CD4-positive, alpha-beta memory T cell (primary cell): ENCODE measurements at regions of chr4 and their contacts with region 1.

Region 1: DNA sequence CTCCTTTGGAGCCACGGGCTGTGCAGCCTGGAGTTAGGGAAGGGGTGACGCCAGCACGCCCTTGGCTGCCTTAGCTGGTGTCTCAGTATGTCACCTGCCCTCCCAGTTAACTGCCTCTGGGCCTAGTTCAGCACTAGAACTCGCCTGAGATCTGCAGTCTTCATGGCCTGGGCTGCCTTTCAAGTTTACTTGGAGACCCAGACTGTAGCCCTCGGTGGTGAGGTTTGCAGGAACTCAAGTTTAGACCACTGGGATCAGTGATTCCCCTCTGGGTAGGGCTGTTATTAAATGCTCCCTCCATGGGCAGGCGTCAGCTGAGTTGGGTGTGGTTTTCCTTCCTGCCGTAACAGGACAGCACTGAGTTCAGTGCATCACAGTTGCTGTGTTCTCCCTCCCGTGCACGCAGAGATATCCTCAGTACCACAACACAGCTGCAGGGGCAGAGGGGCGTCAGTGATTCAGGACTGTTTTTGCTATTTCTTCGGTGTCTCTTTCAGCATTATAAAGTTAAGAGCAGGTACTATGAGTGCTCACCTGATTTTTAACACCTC is 30.5 kb downstream of the PLAC8 start:
- DNase-seq: peak; percentile 75 to 83 (median 78)
- H3K4me3 ChIP-seq: no peak overlapping the region
- H3K4me3 Mint-ChIP-seq: peak overlapping the region in 7 of 8 donors; percentile 43 to 73 (median 73)
- H3K27ac ChIP-seq: peak overlapping the region; percentile 45
- H3K27ac Mint-ChIP-seq: peak overlapping the region; percentile 77 to 97 (median 92)
- H3K4me1 ChIP-seq: peaks cover 30% of the 10 kb centered on the region
- H3K4me1 Mint-ChIP-seq: peaks cover 27 to 39% (median 34%) of the 10 kb centered on the region in 4 donors
- H3K27me3 ChIP-seq: no peaks in the 10 kb centered on the region
- H3K27me3 Mint-ChIP-seq: no peaks in the 10 kb centered on the region

Region 2: DNA sequence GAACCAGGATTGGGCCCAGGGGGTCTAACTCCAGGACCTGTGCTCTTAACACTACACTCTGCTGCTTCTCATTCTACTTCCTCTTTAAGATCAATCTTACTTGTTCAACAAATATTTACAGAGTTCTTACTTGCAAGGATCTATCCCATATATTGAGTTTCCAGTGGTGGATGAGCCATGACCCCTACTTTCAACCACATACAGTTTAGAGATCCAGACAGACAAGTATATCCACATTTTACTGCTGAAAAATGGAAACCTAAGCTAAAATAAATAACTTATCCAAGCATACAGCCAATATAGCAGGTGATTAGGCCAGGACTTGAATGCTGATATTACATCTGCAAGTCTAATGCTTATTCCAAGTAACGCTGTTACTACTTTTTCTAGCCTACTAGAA is 540.9 kb before region 1 on chr4:
- CTCF ChIA-PET with region 1: no interaction called
- POLR2A ChIA-PET with region 1: no interaction called
- intact Hi-C with region 1: no loop called
- DNase-seq: no peak
- H3K4me3 ChIP-seq: no peak overlapping the region
- H3K4me3 Mint-ChIP-seq: no peak overlapping the region
- H3K27ac ChIP-seq: no peak overlapping the region
- H3K27ac Mint-ChIP-seq: no peak overlapping the region
- H3K4me1 ChIP-seq: no peaks in the 10 kb centered on the region
- H3K4me1 Mint-ChIP-seq: no peaks in the 10 kb centered on the region
- H3K27me3 ChIP-seq: no peaks in the 10 kb centered on the region
- H3K27me3 Mint-ChIP-seq: peaks cover 10 to 17% of the 10 kb centered on the region in 2 donors

Region 3: DNA sequence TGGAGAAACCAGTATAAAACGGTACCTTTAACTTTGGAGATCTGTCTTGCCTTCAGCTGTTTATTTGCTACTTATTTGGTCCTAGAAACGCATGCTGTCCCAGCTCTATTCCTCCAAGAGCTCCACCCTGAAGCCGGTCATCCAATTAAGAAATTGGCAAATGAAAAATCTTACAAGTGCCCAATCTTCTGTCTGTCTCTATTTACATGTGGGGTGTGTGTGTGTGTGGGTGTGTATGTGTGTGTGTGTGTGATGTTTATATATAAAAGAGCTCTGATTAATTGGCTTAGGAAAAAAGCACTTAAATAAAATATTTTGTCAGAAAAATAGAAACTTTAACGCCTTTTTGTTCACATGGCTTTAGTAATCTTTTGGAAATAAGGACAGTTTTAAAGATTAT is 13.0 kb after region 1 on chr4:
- CTCF ChIA-PET with region 1: interaction called, 9 read pairs
- POLR2A ChIA-PET with region 1: interaction called, 10 read pairs
- intact Hi-C with region 1: no loop called
- DNase-seq: no peak
- H3K4me3 ChIP-seq: no peak overlapping the region
- H3K4me3 Mint-ChIP-seq: peak overlapping the region in 3 of 8 donors; percentile 22 to 37 (median 31)
- H3K27ac ChIP-seq: no peak overlapping the region
- H3K27ac Mint-ChIP-seq: peak overlapping the region in 5 of 7 donors; percentile 14 to 78 (median 44)
- H3K4me1 ChIP-seq: peaks cover 36% of the 10 kb centered on the region
- H3K4me1 Mint-ChIP-seq: peaks cover 27 to 69% (median 43%) of the 10 kb centered on the region in 4 donors
- H3K27me3 ChIP-seq: no peaks in the 10 kb centered on the region
- H3K27me3 Mint-ChIP-seq: no peaks in the 10 kb centered on the region

Region 4: DNA sequence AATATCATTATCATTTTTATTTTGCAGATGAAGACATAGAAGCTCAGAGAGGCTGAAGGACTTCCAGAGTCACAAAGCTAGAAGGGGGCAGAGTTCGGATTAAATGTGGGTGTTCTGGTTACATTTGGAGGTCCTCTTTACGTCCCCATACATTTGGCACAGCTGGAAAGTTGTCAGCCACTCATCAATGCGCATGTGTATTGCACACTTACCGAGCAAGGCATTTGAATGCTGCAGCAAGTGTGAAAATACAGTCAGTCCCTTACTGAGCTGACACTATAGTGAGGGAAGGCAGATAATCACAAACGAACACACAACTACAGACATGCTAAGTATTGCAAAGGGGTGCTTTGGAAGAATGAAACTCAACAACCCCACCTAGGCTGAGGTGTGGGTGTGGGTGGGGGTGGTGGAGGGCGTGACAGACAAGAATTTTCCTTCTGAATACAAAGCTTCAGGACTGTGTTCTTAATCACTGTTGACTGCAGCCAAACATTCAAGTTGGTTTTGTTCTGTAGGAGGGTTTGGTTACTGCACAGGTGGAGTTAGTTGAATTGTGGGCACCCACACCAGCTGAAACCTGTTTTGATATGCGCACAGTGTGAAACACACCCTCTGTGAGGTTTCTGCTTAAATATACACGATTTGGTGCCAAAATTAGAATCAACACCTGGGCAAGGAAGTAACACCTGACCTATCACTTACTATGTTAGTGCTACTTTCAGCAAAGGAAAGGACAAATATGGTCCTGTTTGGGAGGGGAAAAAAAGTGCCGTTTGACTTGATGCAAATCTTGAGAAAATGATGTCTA is 128.2 kb after region 1 on chr4:
- CTCF ChIA-PET with region 1: interaction called, 18 read pairs
- POLR2A ChIA-PET with region 1: interaction called, 18 read pairs
- intact Hi-C with region 1: loop called (anchors 1 kb)
- DNase-seq: peak; percentile 84 to 93 (median 90)
- H3K4me3 ChIP-seq: peak overlapping the region in 1 of 2 donors; percentile 22
- H3K4me3 Mint-ChIP-seq: peak overlapping the region; percentile 50 to 88 (median 74)
- H3K27ac ChIP-seq: peak overlapping the region; percentile 45
- H3K27ac Mint-ChIP-seq: peak overlapping the region; percentile 45 to 99 (median 96)
- H3K4me1 ChIP-seq: peaks cover 80% of the 10 kb centered on the region
- H3K4me1 Mint-ChIP-seq: peaks cover 57 to 80% (median 68%) of the 10 kb centered on the region in 4 donors
- H3K27me3 ChIP-seq: no peaks in the 10 kb centered on the region
- H3K27me3 Mint-ChIP-seq: no peaks in the 10 kb centered on the region

Region 5: GRCh38 chr4:83217721-83218522 is 133.9 kb after region 1 on chr4:
- CTCF ChIA-PET with region 1: interaction called, 18 read pairs
- POLR2A ChIA-PET with region 1: interaction called, 18 read pairs
- intact Hi-C with region 1: no loop called
- DNase-seq: peak; percentile 82 to 91 (median 86)
- H3K4me3 ChIP-seq: peak overlapping the region in 1 of 2 donors; percentile 9
- H3K4me3 Mint-ChIP-seq: peak overlapping the region; percentile 55 to 77 (median 70)
- H3K27ac ChIP-seq: peak overlapping the region; percentile 64
- H3K27ac Mint-ChIP-seq: peak overlapping the region; percentile 77 to 94 (median 91)
- H3K4me1 ChIP-seq: peaks cover 85% of the 10 kb centered on the region
- H3K4me1 Mint-ChIP-seq: peaks cover 58 to 85% (median 71%) of the 10 kb centered on the region in 4 donors
- H3K27me3 ChIP-seq: no peaks in the 10 kb centered on the region
- H3K27me3 Mint-ChIP-seq: no peaks in the 10 kb centered on the region

Region 6: DNA sequence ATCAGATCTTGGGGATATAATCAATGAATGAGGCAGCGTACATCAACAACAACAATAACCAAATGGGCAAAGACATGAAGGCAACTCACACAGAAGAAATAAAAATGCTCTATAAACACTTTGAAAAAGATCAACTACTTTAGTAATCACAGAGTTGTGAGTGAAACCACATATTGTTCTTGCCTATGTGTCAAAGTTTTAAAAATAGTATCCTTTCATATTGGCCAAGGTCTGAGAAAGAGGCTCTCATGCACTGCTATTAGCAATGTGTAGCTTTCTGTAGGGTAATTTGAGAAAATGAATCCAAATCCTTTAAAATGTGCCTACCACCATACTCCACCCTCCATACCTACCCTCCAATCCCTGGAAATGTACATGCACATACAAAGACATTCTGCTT is 175.6 kb after region 1 on chr4:
- CTCF ChIA-PET with region 1: interaction called, 37 read pairs
- POLR2A ChIA-PET with region 1: interaction called, 9 read pairs
- intact Hi-C with region 1: no loop called
- DNase-seq: no peak
- H3K4me3 ChIP-seq: no peak overlapping the region
- H3K4me3 Mint-ChIP-seq: no peak overlapping the region
- H3K27ac ChIP-seq: no peak overlapping the region
- H3K27ac Mint-ChIP-seq: no peak overlapping the region
- H3K4me1 ChIP-seq: peaks cover 6% of the 10 kb centered on the region
- H3K4me1 Mint-ChIP-seq: peaks cover 0 to 5% (median 3%) of the 10 kb centered on the region in 4 donors
- H3K27me3 ChIP-seq: no peaks in the 10 kb centered on the region
- H3K27me3 Mint-ChIP-seq: no peaks in the 10 kb centered on the region